Activated naive CD4-positive, alpha-beta T cell treated with anti-CD3 and anti-CD28 coated beads for 36 hours (primary cell): ENCODE measurements at regions of chr19 and their contacts with region 1.

Region 1: DNA sequence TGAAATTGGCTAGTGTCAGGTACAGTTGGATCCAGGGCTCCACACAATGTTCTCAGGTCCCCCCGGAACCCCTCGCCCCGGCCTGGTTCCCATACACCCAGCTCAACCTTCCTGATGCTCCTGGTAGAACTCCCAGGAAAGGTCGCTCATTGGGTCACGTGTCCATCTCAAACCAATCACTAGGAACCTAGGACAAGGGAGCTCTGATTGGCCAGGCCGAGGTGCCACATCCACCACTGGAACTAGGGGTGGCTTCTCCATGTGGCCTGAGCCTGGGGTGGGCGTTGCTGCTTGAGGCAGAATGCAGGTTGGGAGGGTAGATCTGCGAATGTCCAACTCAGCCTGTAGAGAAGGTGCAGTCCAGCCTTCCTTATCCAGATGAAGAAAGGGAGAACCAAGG is 6.9 kb upstream of the MEF2B start:
- DNase-seq: no peak
- H3K4me3 Mint-ChIP-seq: no peak overlapping the region
- H3K27ac Mint-ChIP-seq: no peak overlapping the region
- H3K4me1 Mint-ChIP-seq: no peaks in the 10 kb centered on the region
- H3K27me3 Mint-ChIP-seq: no peaks in the 10 kb centered on the region

Region 2: GRCh38 chr19:19155495-19156219 is 21.3 kb before region 1 on chr19:
- CTCF ChIA-PET with region 1: interaction called, 30 read pairs
- intact Hi-C with region 1: no loop called
- DNase-seq: no peak
- H3K4me3 Mint-ChIP-seq: no peak overlapping the region
- H3K27ac Mint-ChIP-seq: no peak overlapping the region
- H3K4me1 Mint-ChIP-seq: no peaks in the 10 kb centered on the region
- H3K27me3 Mint-ChIP-seq: no peaks in the 10 kb centered on the region

Region 3: DNA sequence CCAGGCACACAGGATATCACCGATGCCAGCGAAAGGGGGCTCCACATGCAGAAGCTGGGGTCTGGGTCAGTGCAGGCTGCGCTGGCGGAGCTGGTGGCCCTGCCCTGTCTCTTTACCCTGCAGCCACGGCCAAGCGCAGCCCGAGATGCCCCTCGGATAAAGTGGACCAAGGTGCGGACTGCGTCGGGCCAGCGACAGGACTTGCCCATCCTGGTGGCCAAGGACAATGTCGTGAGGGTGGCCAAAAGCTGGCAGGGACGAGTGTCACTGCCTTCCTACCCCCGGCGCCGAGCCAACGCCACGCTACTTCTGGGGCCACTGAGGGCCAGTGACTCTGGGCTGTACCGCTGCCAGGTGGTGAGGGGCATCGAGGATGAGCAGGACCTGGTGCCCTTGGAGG is 42.0 kb after region 1 on chr19:
- CTCF ChIA-PET with region 1: no interaction called
- intact Hi-C with region 1: no loop called
- DNase-seq: no peak
- H3K4me3 Mint-ChIP-seq: no peak overlapping the region
- H3K27ac Mint-ChIP-seq: no peak overlapping the region
- H3K4me1 Mint-ChIP-seq: peaks cover 2% of the 10 kb centered on the region
- H3K27me3 Mint-ChIP-seq: peaks cover 25% of the 10 kb centered on the region

Region 4: DNA sequence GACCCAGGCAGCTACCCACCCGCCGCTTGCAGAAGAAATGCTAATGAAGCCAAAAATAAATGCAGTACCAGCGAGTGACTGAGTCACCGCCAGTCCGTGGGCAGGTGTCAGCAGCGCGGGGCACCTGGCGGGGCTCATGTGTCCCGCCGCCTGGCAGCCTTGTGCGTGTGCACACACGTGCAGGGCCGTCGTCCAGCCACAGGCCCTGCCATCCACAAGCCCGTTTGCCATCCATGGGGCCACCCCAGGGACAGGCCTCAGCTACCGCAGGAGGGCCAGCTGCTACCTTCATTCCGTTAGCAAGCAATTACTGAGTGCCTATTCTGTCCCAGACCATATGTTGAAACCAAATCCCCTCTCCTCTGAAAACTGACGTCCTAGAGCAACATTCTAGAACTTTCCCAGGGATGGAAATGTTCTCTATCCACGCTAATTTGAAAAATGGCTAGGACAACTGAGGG is 55.3 kb after region 1 on chr19:
- CTCF ChIA-PET with region 1: no interaction called
- intact Hi-C with region 1: no loop called
- DNase-seq: no peak
- H3K4me3 Mint-ChIP-seq: no peak overlapping the region
- H3K27ac Mint-ChIP-seq: no peak overlapping the region
- H3K4me1 Mint-ChIP-seq: no peaks in the 10 kb centered on the region
- H3K27me3 Mint-ChIP-seq: peaks cover 7% of the 10 kb centered on the region